Heart left ventricle (tissue), 16 donors: ENCODE measurements at regions of chr15 and their contacts with region 1.

Region 1: GRCh38 chr15:49620658-49621368 is at the starts of genes DTWD1 and FAM227B:
- DNase-seq: peak; percentile 97 to 99 (median 98)
- ATAC-seq: peak; percentile 99 to 100 (median 100)
- H3K4me3 ChIP-seq: peak within 1 kb of the TSS; percentile 59 to 87 (median 74)
- H3K27ac ChIP-seq: peak within 1 kb of the TSS; percentile 78 to 97 (median 93)
- H3K4me1 ChIP-seq: peaks cover 0 to 40% (median 19%) of the 10 kb centered on the region in 12 donors
- H3K27me3 ChIP-seq: no peaks in the 10 kb centered on the region
- CTCF ChIP-seq: peak in 4 of 12 donors; percentile 14 to 25 (median 14)
- POLR2A ChIP-seq: peak in 1 of 2 donors; percentile 84
- total RNA-seq, gene DTWD1: 6.3 to 28.0 (median 18.4) TPM
- total RNA-seq, gene FAM227B: 6.1 to 18.8 (median 14.4) TPM

Region 2: GRCh38 chr15:49155110-49155833 is 465.5 kb before region 1 on chr15 and contains the start of gene COPS2:
- intact Hi-C with region 1: loop called in 1 of 10 experiments (anchors 10 kb)
- DNase-seq: peak; percentile 91 to 95 (median 94)
- ATAC-seq: peak; percentile 98 to 99 (median 99)
- H3K4me3 ChIP-seq: peak within 1 kb of the TSS; percentile 72 to 96 (median 89)
- H3K27ac ChIP-seq: peak within 1 kb of the TSS; percentile 11 to 93 (median 80)
- H3K4me1 ChIP-seq: peaks cover 0 to 52% (median 33%) of the 10 kb centered on the region in 12 donors
- H3K27me3 ChIP-seq: no peaks in the 10 kb centered on the region
- CTCF ChIP-seq: peak in 2 of 12 donors; percentile 12 to 17
- POLR2A ChIP-seq: peak in 1 of 2 donors; percentile 62
- total RNA-seq, gene COPS2: 41.6 to 94.4 (median 82.8) TPM

Region 3: GRCh38 chr15:49421991-49422390 is 198.8 kb before region 1 on chr15:
- intact Hi-C with region 1: loop called in 4 of 10 experiments (anchors 5 to 10 kb)
- DNase-seq: peak in 3 of 5 donors; percentile 20 to 55 (median 25)
- ATAC-seq: peak in 3 of 4 donors; percentile 52 to 64 (median 62)
- H3K4me3 ChIP-seq: peak overlapping the region in 9 of 12 donors; percentile 19 to 62 (median 32)
- H3K27ac ChIP-seq: peak overlapping the region in 6 of 12 donors; percentile 63 to 77 (median 69)
- H3K4me1 ChIP-seq: peaks cover 0 to 9% (median 0%) of the 10 kb centered on the region in 12 donors
- H3K27me3 ChIP-seq: no peaks in the 10 kb centered on the region
- CTCF ChIP-seq: peak; percentile 50 to 84 (median 67)
- POLR2A ChIP-seq: no peak

Region 4: GRCh38 chr15:49606580-49606979 is 14.2 kb before region 1 on chr15:
- intact Hi-C with region 1: no loop called
- DNase-seq: no peak
- ATAC-seq: no peak
- H3K4me3 ChIP-seq: no peak overlapping the region
- H3K27ac ChIP-seq: no peak overlapping the region
- H3K4me1 ChIP-seq: no peaks in the 10 kb centered on the region
- H3K27me3 ChIP-seq: no peaks in the 10 kb centered on the region
- CTCF ChIP-seq: peak in 1 of 12 donors; percentile 11
- POLR2A ChIP-seq: no peak

Region 5: GRCh38 chr15:49876401-49877038 is 255.7 kb after region 1 on chr15:
- intact Hi-C with region 1: loop called in 1 of 10 experiments (anchors 5 kb)
- DNase-seq: peak in 1 of 5 donors; percentile 33
- ATAC-seq: peak; percentile 36 to 78 (median 58)
- H3K4me3 ChIP-seq: peak overlapping the region in 3 of 12 donors; percentile 13 to 20 (median 16)
- H3K27ac ChIP-seq: peak overlapping the region; percentile 17 to 88 (median 78)
- H3K4me1 ChIP-seq: peaks cover 0 to 34% (median 5%) of the 10 kb centered on the region in 12 donors
- H3K27me3 ChIP-seq: no peaks in the 10 kb centered on the region
- CTCF ChIP-seq: peak; percentile 17 to 54 (median 42)
- POLR2A ChIP-seq: no peak